SK-N-SH (cell line): ENCODE measurements at regions of chr17 and their contacts with region 1.

Region 1: GRCh38 chr17:78412403-78412802 is 34.0 kb downstream of the PGS1 start:
- DNase-seq: peak; percentile 58
- H3K4me3 ChIP-seq: no peak overlapping the region
- H3K27ac ChIP-seq: no peak overlapping the region; a peak in 1 of 4 replicates
- H3K4me1 ChIP-seq: peaks cover 0 to 22% of the 10 kb centered on the region in 2 experiments; a peak in 1 of 4 replicates
- H3K27me3 ChIP-seq: no peaks in the 10 kb centered on the region
- CTCF ChIP-seq: peak; percentile 59
- EP300 ChIP-seq: no peak
- RAD21 ChIP-seq: no peak

Region 2: GRCh38 chr17:78390241-78391050 is 22.0 kb before region 1 on chr17:
- CTCF ChIA-PET with region 1: interaction called, 17 read pairs
- POLR2A ChIA-PET with region 1: no interaction called
- DNase-seq: peak; percentile 76
- H3K4me3 ChIP-seq: no peak overlapping the region
- H3K27ac ChIP-seq: peak overlapping the region; percentile 45 to 71; a peak in 3 of 4 replicates
- H3K4me1 ChIP-seq: peaks cover 10 to 30% of the 10 kb centered on the region in 2 experiments; a peak in 3 of 4 replicates
- H3K27me3 ChIP-seq: no peaks in the 10 kb centered on the region
- CTCF ChIP-seq: peak; percentile 41
- EP300 ChIP-seq: peak in 1 of 2 experiments; percentile 75; a peak in 1 of 4 replicates
- RAD21 ChIP-seq: no peak

Region 3: GRCh38 chr17:78397681-78398101 is 14.7 kb before region 1 on chr17:
- CTCF ChIA-PET with region 1: interaction called, 17 read pairs
- POLR2A ChIA-PET with region 1: interaction called, 3 read pairs
- DNase-seq: no peak
- H3K4me3 ChIP-seq: no peak overlapping the region
- H3K27ac ChIP-seq: no peak overlapping the region
- H3K4me1 ChIP-seq: peaks cover 0 to 3% of the 10 kb centered on the region in 2 experiments; a peak in 1 of 4 replicates
- H3K27me3 ChIP-seq: no peaks in the 10 kb centered on the region
- CTCF ChIP-seq: no peak
- EP300 ChIP-seq: no peak
- RAD21 ChIP-seq: no peak

Region 4: DNA sequence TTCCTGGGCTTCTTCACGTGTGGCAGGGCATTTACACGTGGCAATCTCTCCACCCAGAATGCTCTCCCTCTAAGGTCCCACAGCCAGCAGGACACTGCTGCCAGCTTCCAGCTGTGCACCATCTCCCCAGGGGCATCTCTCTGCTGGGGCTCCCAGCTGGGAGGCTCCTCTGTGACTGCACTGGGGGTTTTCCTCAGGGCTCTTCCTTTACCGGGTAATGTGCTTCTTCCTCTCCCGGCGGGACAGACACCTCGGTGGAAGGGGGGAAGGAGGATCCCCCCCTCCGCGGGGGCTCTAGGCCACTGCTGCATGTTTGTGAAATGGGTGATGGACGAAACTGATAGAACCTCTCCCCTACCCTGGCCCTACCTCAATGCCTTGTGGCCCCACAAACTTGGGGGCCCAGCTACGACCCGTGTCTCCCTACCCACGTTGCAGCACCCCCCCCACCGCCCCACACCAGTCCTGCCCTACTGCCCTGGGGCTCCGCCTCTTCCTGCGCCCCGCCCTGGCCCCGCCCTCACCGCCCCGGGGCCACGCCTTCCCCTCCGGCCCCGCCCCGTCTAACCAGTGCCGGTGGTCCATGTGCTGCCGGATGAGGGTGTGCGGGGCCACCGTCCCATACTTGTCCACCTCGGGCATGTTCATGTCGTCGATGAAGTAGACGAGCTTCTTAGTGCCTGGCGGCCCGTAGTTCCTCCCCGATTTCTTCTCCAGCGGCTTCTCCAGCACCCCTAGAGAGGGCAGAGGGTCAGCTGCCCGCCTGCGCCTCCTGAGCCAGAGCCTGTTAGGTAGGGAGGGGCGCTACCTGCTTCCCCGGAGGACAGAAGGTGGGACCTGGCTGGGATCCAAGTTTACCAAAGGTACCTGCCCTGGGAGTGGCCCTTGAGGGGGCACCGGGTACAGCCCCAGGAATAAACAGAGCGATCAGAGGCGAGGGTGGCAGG is 72.2 kb after region 1 on chr17:
- CTCF ChIA-PET with region 1: no interaction called
- POLR2A ChIA-PET with region 1: no interaction called
- DNase-seq: no peak
- H3K4me3 ChIP-seq: no peak overlapping the region
- H3K27ac ChIP-seq: no peak overlapping the region
- H3K4me1 ChIP-seq: no peaks in the 10 kb centered on the region; a peak in 1 of 4 replicates
- H3K27me3 ChIP-seq: no peaks in the 10 kb centered on the region
- CTCF ChIP-seq: no peak
- EP300 ChIP-seq: no peak
- RAD21 ChIP-seq: no peak